GM13977 (cell line): ENCODE measurements at regions of chr3 and their contacts with region 1.

Region 1: GRCh38 chr3:67384760-67385397 is 269.5 kb downstream of the SUCLG2 start:
- DNase-seq: peak; percentile 25
- CTCF ChIP-seq: peak; percentile 79

Region 2: DNA sequence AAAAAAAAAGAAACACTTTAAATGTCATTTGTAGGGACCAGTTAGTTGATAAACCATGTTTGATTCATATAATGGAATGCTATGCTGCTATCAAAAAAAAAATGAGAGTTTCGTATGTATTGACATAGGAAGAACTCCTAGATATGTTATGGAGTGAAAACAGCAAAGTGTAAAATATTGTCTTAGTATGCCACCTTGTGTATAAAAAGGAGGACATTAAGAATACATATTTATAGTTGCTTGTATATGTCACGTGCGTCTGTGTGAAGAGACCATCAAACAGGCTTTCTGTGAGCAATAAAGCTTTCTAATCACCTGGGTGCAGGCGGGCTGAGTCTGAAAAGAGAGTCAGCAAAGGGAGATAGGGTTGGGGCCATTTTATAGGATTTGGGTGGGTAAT is 347.3 kb before region 1 on chr3:
- in situ Hi-C with region 1: no loop called
- DNase-seq: no peak
- CTCF ChIP-seq: no peak

Region 3: DNA sequence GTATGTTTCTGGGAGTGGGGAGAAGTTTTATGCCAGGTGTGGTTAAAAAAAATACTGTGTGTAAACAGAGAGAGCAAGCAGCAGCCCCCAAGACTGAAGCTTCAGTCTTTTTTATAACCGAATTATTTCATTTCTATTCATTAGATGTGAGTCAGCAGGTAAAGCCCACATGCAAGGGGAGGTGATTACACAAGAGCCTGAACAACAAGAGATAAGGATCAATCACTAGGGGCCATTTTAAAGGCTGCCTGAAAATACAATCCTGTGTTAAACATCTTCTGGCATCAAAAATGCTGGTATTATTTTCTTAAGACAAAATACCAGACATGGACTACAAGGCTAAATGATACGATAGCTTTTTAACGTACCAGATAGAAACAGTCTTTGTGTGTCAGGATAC is 52.2 kb after region 1 on chr3:
- in situ Hi-C with region 1: no loop called
- DNase-seq: no peak
- CTCF ChIP-seq: no peak

Region 4: DNA sequence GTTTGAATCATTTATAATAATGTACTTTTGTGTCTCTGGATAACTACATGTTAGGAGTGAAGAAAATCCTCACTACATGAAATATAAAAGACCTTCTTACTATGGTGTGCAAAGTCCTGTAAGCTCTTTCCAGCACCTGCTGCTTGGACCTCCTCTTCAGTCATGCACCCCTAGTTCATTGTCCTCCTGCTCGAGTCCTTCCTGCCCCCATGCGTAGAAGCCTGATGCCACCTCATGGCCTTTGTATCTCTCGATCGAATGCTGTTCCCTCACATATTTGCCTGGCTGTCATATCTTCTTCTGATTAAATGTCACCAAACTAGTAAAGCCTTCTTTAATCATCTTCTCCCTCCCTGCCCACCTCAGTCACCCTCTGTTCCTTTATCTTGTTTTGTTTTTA is 319.4 kb after region 1 on chr3:
- in situ Hi-C with region 1: no loop called
- DNase-seq: no peak
- CTCF ChIP-seq: peak; percentile 17

Region 5: DNA sequence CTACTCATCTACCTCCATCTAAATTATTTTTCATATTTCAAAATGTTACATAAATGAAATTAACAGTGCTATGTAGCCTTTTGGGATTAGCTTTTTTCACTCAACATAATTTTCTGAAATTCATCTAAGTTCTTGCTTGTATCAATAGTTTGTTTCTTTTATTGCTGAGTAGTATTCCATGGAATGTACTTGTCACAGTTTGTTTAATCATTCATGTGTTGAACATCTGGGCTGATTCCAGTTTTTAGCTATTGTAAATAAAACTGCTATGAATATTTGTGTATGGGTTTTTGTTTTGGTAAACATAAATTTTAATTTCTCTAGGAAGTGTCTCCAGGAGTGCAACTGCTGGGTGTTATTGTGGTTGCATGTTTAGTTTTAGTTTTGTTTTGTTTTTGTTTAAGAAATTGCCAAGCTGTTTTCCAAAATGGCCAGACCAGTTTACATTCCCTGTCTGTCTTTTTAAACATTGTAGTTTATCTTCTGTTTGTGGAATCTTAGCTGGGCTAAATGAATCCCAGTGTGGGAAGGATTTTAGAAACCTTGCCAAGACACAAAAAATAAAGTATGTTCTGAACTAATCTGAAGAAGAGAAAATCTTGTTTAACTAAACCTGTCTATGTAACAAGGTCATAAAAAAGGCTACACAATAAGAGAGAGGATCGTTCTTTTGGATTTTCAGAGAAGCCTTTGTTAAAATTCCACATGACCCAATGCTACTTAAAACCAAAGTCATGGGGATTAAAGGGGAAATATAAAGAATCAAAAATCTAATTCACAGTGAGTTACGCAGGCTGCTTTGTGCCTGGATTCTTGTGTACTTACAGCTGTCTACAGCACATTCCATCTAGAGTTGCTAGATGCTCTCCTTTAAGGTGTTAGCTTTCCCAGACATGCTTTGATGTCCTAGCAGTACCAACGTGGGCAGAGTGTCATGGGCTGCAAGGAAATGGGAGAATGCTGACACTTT is 398.7 kb after region 1 on chr3:
- in situ Hi-C with region 1: loop called (anchors 10 kb)
- DNase-seq: no peak
- CTCF ChIP-seq: no peak